Activated naive CD4-positive, alpha-beta T cell treated with anti-CD3 and anti-CD28 coated beads for 36 hours (primary cell): ENCODE measurements at regions of chr17 and their contacts with region 1.

Region 1: GRCh38 chr17:12990041-12990808 is 27.6 kb downstream of the ELAC2 start:
- DNase-seq: no peak
- H3K4me3 Mint-ChIP-seq: no peak overlapping the region
- H3K27ac Mint-ChIP-seq: no peak overlapping the region
- H3K4me1 Mint-ChIP-seq: no peaks in the 10 kb centered on the region
- H3K27me3 Mint-ChIP-seq: no peaks in the 10 kb centered on the region

Region 2: DNA sequence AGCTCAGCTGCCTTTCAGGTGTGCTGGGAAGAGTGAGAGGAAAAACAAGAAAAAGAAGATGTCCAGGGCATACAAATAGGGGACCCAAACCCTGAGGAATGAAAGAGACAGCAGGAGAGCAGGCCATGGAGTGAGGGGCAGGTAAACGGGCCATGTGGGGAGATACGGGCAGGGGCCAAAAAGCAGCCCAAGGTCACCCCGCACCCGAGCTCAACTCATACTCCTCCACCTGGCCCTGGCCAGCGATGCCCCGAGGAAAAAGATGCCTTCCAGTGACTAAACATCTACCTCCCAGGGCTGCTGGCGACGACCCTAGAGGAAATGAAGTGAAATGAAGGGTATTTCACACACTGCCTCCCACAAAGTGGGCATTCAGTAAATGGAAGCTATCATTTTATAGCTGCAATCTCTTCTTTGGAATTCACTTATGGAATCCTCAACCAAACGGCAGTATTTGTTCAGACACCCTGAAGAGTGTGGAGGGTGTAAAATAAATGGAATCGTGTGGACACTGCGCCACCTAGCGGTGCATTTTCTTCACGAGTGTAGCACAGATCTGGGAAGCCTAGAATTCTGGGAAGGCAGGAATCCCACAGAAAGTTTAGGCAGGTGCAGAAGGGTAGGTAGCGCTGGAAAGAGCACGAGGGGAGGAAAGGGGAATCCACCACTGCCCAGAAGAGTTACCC is 12.7 kb after region 1 on chr17:
- CTCF ChIA-PET with region 1: interaction called, 14 read pairs
- intact Hi-C with region 1: no loop called
- DNase-seq: peak; percentile 68
- H3K4me3 Mint-ChIP-seq: no peak overlapping the region
- H3K27ac Mint-ChIP-seq: no peak overlapping the region
- H3K4me1 Mint-ChIP-seq: peaks cover 2% of the 10 kb centered on the region
- H3K27me3 Mint-ChIP-seq: no peaks in the 10 kb centered on the region